Endothelial cell of umbilical vein (primary cell): ENCODE measurements at regions of chrX and their contacts with region 1.

Region 1: DNA sequence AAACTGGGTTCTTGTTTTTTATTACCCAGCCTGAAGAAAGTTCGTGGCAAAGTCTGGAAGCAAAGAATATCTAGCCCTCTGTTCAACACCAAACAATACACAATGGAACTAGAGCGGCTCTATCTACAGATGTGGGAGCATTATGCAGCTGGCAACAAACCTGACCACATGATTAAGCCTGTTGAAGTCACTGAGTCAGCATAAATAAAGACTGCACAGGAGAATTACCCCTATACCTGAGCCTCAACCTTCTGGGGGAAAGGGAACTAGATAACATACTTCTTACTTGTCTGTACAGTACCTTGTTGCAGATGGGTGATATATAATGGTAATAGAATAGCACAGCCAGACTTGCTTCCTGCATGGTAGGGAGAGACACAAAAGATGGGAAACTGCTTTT is 4.6 kb upstream of the GCNA start:
- DNase-seq: no peak
- H3K4me3 ChIP-seq: no peak overlapping the region
- H3K27ac ChIP-seq: peak overlapping the region; percentile 7
- H3K4me1 ChIP-seq: peaks cover 9% of the 10 kb centered on the region
- H3K27me3 ChIP-seq: no peaks in the 10 kb centered on the region
- CTCF ChIP-seq: no peak
- POLR2A ChIP-seq: no peak

Region 2: GRCh38 chrX:71606536-71607216 is 33.1 kb after region 1 on chrX:
- CTCF ChIA-PET with region 1: no interaction called
- POLR2A ChIA-PET with region 1: no interaction called
- dilution Hi-C with region 1: no loop called
- intact Hi-C with region 1: loop called (anchors 5 kb)
- DNase-seq: peak; percentile 36
- H3K4me3 ChIP-seq: no peak overlapping the region
- H3K27ac ChIP-seq: peak overlapping the region; percentile 38
- H3K4me1 ChIP-seq: peaks cover 27% of the 10 kb centered on the region
- H3K27me3 ChIP-seq: no peaks in the 10 kb centered on the region
- CTCF ChIP-seq: no peak
- POLR2A ChIP-seq: no peak